ENCODE measurements at regions of chr16 and their contacts with region 1.

Region 1: GRCh38 chr16:19886073-19886941 is 1.7 kb upstream of the GPRC5B start:
- DNase-seq: peak; percentile 60 to 78
- H3K4me3 ChIP-seq: peak overlapping the region; percentile 77 to 92 (median 82)
- H3K27ac ChIP-seq: peak overlapping the region in 1 of 2 donors; percentile 44
- H3K4me1 ChIP-seq: no peaks in the 10 kb centered on the region
- H3K27me3 ChIP-seq: no peaks in the 10 kb centered on the region
- CTCF ChIP-seq: peak; percentile 99 to 100 (median 100)
- POLR2A ChIP-seq: no peak

Region 2: GRCh38 chr16:19595043-19595767 is 291.1 kb before region 1 on chr16:
- intact Hi-C with region 1: loop called (anchors 10 kb)
- DNase-seq: no peak
- H3K4me3 ChIP-seq: no peak overlapping the region
- H3K27ac ChIP-seq: no peak overlapping the region
- H3K4me1 ChIP-seq: no peaks in the 10 kb centered on the region
- H3K27me3 ChIP-seq: no peaks in the 10 kb centered on the region
- CTCF ChIP-seq: no peak
- POLR2A ChIP-seq: no peak

Region 3: DNA sequence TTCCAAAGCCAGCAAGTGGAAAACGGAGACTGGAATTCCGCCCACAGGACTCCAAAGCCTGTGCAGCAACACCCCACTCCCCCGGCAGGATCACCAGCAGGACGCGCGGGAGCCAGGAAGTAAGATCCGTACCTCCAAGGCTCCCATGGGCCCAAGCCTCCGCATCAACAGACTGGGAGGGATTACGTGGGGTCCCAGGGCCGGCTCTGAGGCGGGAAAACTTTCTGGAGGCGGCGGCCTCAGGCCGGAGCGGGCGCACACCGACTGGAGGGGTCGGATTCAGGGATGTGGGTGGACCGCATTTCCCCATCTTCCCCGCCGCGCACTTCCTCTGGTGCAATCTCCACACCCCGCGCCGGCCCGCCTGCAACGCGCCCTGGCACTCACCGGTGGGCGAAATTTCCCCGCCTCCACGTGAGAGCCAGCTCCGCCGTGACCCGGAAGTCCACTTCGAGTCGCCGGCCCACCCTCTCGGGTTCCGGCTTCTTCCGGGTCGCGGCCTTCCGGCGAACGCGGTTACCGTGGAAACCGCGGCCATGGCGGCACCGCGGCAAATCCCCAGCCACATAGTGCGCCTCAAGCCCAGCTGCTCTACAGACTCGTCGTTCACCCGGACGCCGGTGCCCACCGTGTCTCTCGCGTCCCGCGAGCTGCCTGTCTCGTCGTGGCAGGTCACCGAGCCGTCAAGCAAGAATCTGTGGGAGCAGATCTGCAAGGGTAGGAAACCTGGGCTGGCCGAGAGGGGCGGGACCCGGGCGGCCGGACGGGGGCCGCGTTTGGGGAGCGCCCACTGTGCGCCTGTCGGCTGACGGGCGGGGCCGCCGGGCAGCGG is 168.3 kb before region 1 on chr16 and contains the starts of genes IQCK and KNOP1:
- intact Hi-C with region 1: loop called (anchors 10 kb)
- DNase-seq: peak; percentile 81 to 82
- H3K4me3 ChIP-seq: peak within 1 kb of the TSS; percentile 69 to 99 (median 88)
- H3K27ac ChIP-seq: peak within 1 kb of the TSS; percentile 76 to 94
- H3K4me1 ChIP-seq: peaks cover 5 to 24% of the 10 kb centered on the region in 2 donors
- H3K27me3 ChIP-seq: no peaks in the 10 kb centered on the region
- CTCF ChIP-seq: peak in 1 of 3 donors; percentile 34
- POLR2A ChIP-seq: peak; percentile 15
- total RNA-seq, gene IQCK: 25.9 to 63.8 (median 34.7) TPM
- total RNA-seq, gene KNOP1: 12.3 to 15.4 (median 13.0) TPM

Region 4: DNA sequence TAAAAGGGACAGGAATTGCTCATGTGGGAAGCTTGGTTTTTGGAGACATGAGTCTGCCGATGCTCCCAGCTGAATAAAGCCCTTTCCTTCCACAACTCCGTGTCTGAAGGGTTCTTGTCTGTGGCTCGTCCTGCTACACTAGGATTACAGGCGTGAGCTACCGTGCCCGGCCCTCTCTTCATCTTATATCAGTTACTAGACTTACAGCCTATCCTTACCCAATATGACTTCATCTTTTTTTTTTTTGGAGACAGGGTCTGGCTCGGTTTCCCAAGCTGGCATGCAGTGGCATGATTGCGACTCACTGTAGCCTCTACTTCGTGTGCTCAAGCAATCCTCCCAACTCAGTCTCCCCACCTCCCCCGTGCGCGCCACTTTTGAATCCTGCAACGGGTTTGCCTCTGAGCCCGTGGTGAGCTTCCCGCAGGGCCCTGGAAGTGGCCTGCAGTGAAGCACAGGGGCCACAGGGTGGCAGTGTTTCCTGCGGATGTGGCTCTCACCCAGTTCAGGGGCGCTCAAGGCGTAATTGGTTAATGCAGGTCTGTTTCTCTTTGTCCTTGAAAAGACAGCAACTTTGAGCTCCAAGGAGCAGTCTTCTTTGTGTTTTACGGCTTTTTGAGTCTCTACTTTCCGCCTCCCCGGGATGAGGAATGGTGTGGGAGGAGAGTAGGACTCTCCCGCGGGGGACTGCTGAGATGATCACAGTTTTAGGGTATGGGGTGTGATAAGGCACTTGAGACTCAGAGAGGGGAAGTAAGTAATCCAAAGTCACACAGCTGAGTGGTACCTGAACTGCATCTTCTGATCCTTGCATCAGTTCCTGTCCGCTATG is 21.1 kb after region 1 on chr16:
- intact Hi-C with region 1: no loop called
- DNase-seq: peak in 1 of 2 donors; percentile 29
- H3K4me3 ChIP-seq: peak overlapping the region in 1 of 3 donors; percentile 31
- H3K27ac ChIP-seq: no peak overlapping the region
- H3K4me1 ChIP-seq: no peaks in the 10 kb centered on the region
- H3K27me3 ChIP-seq: no peaks in the 10 kb centered on the region
- CTCF ChIP-seq: peak; percentile 37 to 90 (median 83)
- POLR2A ChIP-seq: no peak

Region 5: GRCh38 chr16:20291208-20292206 is 405.2 kb after region 1 on chr16:
- intact Hi-C with region 1: no loop called
- DNase-seq: no peak
- H3K4me3 ChIP-seq: no peak overlapping the region
- H3K27ac ChIP-seq: no peak overlapping the region
- H3K4me1 ChIP-seq: no peaks in the 10 kb centered on the region
- H3K27me3 ChIP-seq: peaks cover 0 to 20% of the 10 kb centered on the region in 2 donors
- CTCF ChIP-seq: no peak
- POLR2A ChIP-seq: no peak

Region 6: GRCh38 chr16:20504418-20504817 is 618.1 kb after region 1 on chr16:
- intact Hi-C with region 1: no loop called
- DNase-seq: no peak
- H3K4me3 ChIP-seq: no peak overlapping the region
- H3K27ac ChIP-seq: no peak overlapping the region
- H3K4me1 ChIP-seq: no peaks in the 10 kb centered on the region
- H3K27me3 ChIP-seq: no peaks in the 10 kb centered on the region
- CTCF ChIP-seq: no peak
- POLR2A ChIP-seq: no peak

Measured in breast epithelium (tissue), 4 donors.